Panc1 (cell line): ENCODE measurements at regions of chr7 and their contacts with region 1.

Region 1: GRCh38 chr7:66952343-66953043 is 31.5 kb downstream of the TMEM248 start:
- DNase-seq: peak; percentile 91
- ATAC-seq: peak; percentile 93
- H3K4me3 ChIP-seq: no peak overlapping the region
- H3K27ac ChIP-seq: peak overlapping the region; percentile 23; the same call in 1 of the 2 replicates
- H3K4me1 ChIP-seq: peaks cover 10% of the 10 kb centered on the region
- H3K27me3 ChIP-seq: no peaks in the 10 kb centered on the region
- CTCF ChIP-seq: no peak

Region 2: GRCh38 chr7:66832531-66833351 is 119.8 kb before region 1 on chr7:
- CTCF ChIA-PET with region 1: no interaction called
- POLR2A ChIA-PET with region 1: interaction called, 10 read pairs
- in situ Hi-C with region 1: no loop called
- intact Hi-C with region 1: no loop called
- DNase-seq: no peak
- ATAC-seq: no peak
- H3K4me3 ChIP-seq: no peak overlapping the region
- H3K27ac ChIP-seq: no peak overlapping the region
- H3K4me1 ChIP-seq: no peaks in the 10 kb centered on the region
- H3K27me3 ChIP-seq: no peaks in the 10 kb centered on the region
- CTCF ChIP-seq: no peak

Region 3: GRCh38 chr7:67033251-67033650 is 80.8 kb after region 1 on chr7:
- CTCF ChIA-PET with region 1: no interaction called
- POLR2A ChIA-PET with region 1: interaction called, 10 read pairs
- in situ Hi-C with region 1: no loop called
- intact Hi-C with region 1: no loop called
- DNase-seq: no peak
- ATAC-seq: no peak
- H3K4me3 ChIP-seq: no peak overlapping the region
- H3K27ac ChIP-seq: no peak overlapping the region
- H3K4me1 ChIP-seq: no peaks in the 10 kb centered on the region
- H3K27me3 ChIP-seq: no peaks in the 10 kb centered on the region
- CTCF ChIP-seq: no peak